Mammary epithelial cell (primary cell): ENCODE measurements at regions of chr4 and their contacts with region 1.

Region 1: GRCh38 chr4:141654098-141654497 is 17.7 kb downstream of the IL15 start:
- DNase-seq: no peak
- H3K4me3 ChIP-seq: no peak overlapping the region
- H3K27ac ChIP-seq: no peak overlapping the region
- H3K4me1 ChIP-seq: no peaks in the 10 kb centered on the region
- H3K27me3 ChIP-seq: no peaks in the 10 kb centered on the region
- CTCF ChIP-seq: peak; percentile 57 to 75

Region 2: DNA sequence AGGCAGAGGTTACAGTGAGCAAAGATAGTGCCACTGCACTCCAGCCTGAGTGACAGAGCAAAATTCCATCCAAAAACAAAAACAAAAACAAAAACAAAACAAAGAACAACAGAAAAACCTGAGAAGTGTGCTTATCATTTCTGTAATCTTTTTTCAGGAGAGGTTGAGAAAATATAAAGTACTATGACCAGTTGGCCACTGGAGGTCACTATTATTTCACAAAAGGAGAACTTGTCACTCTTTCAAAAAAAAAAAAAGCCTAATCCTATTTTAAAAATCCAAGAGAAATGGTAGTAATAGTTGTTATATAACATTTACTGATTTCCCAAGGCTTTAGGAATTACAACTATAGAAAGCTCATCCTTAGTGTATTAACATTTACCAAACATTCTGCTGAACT is 495.9 kb before region 1 on chr4:
- CTCF ChIA-PET with region 1: no interaction called
- dilution Hi-C with region 1: no loop called
- in situ Hi-C with region 1: no loop called
- intact Hi-C with region 1: loop called (anchors 1 kb)
- DNase-seq: no peak
- H3K4me3 ChIP-seq: no peak overlapping the region
- H3K27ac ChIP-seq: no peak overlapping the region
- H3K4me1 ChIP-seq: no peaks in the 10 kb centered on the region
- H3K27me3 ChIP-seq: no peaks in the 10 kb centered on the region
- CTCF ChIP-seq: peak; percentile 23 to 47

Region 3: DNA sequence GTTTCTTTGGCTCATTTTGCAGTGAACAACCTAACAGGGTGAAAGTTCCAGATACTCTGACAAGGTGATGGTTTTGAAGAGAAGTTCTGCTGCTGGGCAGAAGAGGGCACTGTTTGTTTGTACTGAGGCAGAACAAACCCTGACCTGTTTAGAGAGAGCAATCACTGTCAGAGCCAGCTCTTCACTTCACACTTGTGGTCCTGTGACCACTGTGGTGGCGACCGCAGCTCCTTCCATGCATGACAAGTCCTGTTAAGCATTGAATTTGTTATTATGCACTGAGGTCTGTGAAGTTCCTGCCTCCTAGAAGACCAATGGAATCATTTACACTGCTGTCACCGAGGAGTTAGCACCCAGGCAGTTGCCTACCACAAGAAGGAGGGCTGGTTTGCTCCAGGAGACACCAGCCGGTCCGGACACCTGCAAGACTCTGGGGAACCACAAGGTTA is 346.8 kb before region 1 on chr4:
- CTCF ChIA-PET with region 1: interaction called, 7 read pairs
- dilution Hi-C with region 1: no loop called
- in situ Hi-C with region 1: no loop called
- intact Hi-C with region 1: loop called (anchors 2 kb)
- DNase-seq: peak; percentile 52
- H3K4me3 ChIP-seq: no peak overlapping the region
- H3K27ac ChIP-seq: no peak overlapping the region
- H3K4me1 ChIP-seq: no peaks in the 10 kb centered on the region
- H3K27me3 ChIP-seq: no peaks in the 10 kb centered on the region
- CTCF ChIP-seq: peak; percentile 84 to 85

Region 4: GRCh38 chr4:141346144-141346543 is 308.0 kb before region 1 on chr4:
- CTCF ChIA-PET with region 1: interaction called, 3 read pairs
- dilution Hi-C with region 1: no loop called
- in situ Hi-C with region 1: no loop called
- intact Hi-C with region 1: loop called (anchors 1 kb)
- DNase-seq: peak; percentile 39
- H3K4me3 ChIP-seq: no peak overlapping the region
- H3K27ac ChIP-seq: no peak overlapping the region
- H3K4me1 ChIP-seq: peaks cover 13% of the 10 kb centered on the region
- H3K27me3 ChIP-seq: no peaks in the 10 kb centered on the region
- CTCF ChIP-seq: peak; percentile 58 to 64

Region 5: DNA sequence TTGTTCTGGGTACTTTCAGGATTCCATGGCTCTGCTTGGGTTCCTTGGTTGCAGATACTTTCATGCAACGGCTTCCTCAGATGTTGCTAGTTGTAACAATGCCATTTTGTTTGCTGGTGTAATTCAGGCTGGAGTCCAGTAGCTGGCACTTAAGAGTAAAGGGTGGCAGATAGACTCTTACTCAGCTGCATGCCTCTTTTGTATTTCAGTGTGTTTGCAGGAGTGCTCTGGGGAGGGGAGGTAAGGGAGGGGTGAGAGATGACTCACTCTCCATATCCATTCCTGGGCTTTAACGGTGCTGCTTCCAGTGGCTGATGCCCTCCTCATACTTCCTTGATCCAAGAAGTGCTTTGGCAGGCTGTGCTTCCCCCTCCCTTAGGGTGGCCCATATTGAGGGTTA is 278.2 kb before region 1 on chr4:
- CTCF ChIA-PET with region 1: no interaction called
- dilution Hi-C with region 1: no loop called
- in situ Hi-C with region 1: no loop called
- intact Hi-C with region 1: loop called (anchors 1 kb)
- DNase-seq: peak; percentile 83
- H3K4me3 ChIP-seq: no peak overlapping the region
- H3K27ac ChIP-seq: no peak overlapping the region
- H3K4me1 ChIP-seq: peaks cover 4% of the 10 kb centered on the region
- H3K27me3 ChIP-seq: no peaks in the 10 kb centered on the region
- CTCF ChIP-seq: peak; percentile 89 to 99

Region 6: DNA sequence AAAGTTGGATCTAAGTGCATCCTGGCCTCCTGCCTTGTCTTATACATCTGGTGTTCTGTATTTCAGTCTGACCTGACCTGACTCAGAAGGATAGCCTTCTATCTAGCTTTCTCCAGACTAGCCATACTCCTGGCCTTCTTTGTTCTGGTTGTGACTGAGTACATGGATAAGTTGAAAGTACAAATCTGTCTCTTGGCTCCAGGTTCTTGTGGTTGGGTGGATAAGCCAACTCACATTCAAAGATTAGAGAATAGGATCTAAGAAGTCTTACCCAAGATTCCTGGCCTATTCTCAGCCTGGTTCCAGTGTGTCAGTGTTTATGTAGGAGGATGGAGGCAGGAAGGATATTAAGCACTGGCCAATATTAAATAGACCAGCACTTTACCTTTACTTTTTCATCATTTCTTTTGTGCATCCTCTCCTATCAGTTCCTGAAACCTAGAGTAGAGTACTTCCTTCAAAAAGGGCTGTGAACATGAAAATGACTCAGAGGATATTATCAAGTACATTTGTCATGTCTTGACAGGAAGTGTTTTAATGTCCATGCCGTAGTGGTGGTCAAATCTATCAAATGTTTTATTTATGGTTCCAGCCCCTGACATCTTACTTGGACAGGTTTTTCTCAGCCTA is 105.8 kb after region 1 on chr4:
- CTCF ChIA-PET with region 1: no interaction called
- dilution Hi-C with region 1: no loop called
- in situ Hi-C with region 1: no loop called
- intact Hi-C with region 1: no loop called
- DNase-seq: peak; percentile 20
- H3K4me3 ChIP-seq: no peak overlapping the region
- H3K27ac ChIP-seq: no peak overlapping the region
- H3K4me1 ChIP-seq: no peaks in the 10 kb centered on the region
- H3K27me3 ChIP-seq: no peaks in the 10 kb centered on the region
- CTCF ChIP-seq: no peak